BJ (cell line): ENCODE measurements at regions of chr2 and their contacts with region 1.

Region 1: GRCh38 chr2:75064691-75065396 is 106.4 kb downstream of the POLE4 start:
- DNase-seq: no peak
- H3K4me3 ChIP-seq: no peak overlapping the region
- H3K27me3 ChIP-seq: no peaks in the 10 kb centered on the region
- CTCF ChIP-seq: peak; percentile 84

Region 2: GRCh38 chr2:75042823-75043222 is 22.0 kb before region 1 on chr2:
- CTCF ChIA-PET with region 1: interaction called, 15 read pairs
- POLR2A ChIA-PET with region 1: no interaction called
- DNase-seq: no peak
- H3K4me3 ChIP-seq: no peak overlapping the region
- H3K27me3 ChIP-seq: no peaks in the 10 kb centered on the region
- CTCF ChIP-seq: no peak

Region 3: DNA sequence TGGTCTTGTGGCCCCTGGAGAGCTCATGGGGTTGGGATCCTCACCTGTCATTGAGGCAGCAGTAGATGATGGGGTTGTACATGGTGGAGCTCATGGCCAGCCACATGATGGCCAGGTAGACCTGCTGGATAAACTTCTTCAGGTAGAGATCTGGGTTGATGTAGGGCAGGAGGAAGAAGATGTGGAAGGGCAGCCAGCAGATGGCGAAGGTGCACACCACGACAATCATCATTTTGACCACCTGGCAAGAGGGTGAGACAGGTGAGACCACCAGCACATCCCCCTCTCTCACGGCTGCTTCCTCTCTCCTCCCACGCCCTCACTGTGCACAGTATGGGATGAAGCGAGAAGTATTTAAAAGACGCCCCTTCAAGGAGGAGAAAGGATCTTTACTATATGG is 13.6 kb before region 1 on chr2:
- CTCF ChIA-PET with region 1: interaction called, 19 read pairs
- POLR2A ChIA-PET with region 1: no interaction called
- DNase-seq: no peak
- H3K4me3 ChIP-seq: no peak overlapping the region
- H3K27me3 ChIP-seq: no peaks in the 10 kb centered on the region
- CTCF ChIP-seq: no peak

Region 4: DNA sequence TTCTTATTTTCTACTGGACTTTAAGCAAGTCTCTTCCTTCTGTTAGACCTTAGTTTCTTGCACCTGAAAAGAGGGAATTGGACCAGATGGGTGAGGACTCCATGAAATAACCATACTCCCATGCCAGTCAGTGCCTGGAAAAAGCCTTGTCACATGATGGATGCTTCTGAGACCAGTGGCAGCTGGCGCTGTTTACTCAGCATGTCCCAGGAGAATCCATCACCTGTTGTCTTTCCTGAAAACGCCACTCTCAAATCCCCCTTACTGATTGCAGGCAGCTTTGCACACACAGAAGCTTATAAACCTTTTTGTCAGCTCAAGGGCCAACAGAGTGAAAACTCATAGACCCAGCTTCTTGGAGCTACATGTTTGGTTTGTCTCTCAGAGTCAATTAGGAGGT is 11.2 kb after region 1 on chr2:
- CTCF ChIA-PET with region 1: interaction called, 37 read pairs
- POLR2A ChIA-PET with region 1: no interaction called
- DNase-seq: no peak
- H3K4me3 ChIP-seq: no peak overlapping the region
- H3K27me3 ChIP-seq: no peaks in the 10 kb centered on the region
- CTCF ChIP-seq: no peak

Region 5: DNA sequence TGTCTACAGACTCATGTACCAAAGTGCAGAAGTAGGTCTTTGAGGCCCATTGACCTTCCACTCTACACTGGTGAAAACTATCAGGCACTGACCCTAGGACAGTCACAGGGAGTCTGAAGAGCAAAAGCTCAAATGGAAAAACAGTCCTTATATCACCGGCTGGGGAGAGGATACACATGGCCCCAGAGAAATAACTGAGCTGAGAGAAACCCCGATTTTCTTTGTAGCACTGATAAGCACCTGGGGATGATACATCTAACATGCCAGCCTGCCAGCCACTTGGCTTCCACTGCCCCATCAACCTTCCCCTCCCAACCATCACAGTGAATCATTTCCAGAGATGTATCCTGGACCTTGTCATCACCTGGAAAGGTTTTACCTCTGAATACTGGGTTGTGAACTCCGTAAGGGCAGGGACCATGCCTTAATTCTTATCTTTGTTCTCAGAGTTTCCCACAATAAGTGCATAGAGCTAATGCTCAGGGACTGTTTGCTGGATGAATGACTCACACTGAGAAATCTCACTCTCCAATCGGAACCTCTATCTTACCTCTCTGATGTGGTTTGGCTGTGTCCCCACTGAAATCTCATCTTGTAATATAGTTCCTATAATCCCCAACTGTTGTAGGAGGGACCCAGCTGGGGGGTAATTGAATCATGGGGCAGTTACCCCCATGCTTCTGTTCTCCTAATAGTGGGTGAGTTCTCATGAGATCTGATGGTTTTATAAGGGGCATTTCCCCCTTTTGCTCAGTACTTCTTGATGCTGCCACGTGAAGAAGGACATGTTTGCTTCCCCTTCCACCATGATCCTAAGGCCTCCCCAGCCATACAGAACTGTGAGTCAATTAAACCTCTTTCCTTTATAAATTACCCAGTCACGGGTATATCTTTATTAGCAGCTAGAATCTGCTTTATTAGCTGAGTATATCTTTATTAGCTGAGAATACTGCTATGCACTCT is 458.8 kb after region 1 on chr2:
- CTCF ChIA-PET with region 1: no interaction called
- POLR2A ChIA-PET with region 1: no interaction called
- DNase-seq: no peak
- H3K4me3 ChIP-seq: no peak overlapping the region
- H3K27me3 ChIP-seq: no peaks in the 10 kb centered on the region
- CTCF ChIP-seq: no peak